ENCODE measurements at regions of chr4 and their contacts with region 1.

Region 1: GRCh38 chr4:67545199-67546003 is at the start of gene CENPC:
- DNase-seq: peak; percentile 93
- ATAC-seq: peak; percentile 92
- H3K4me3 ChIP-seq: peak within 1 kb of the TSS; percentile 65 to 96 (median 86)
- H3K4me3 Mint-ChIP-seq: peak within 1 kb of the TSS; percentile 97
- H3K27ac ChIP-seq: peak within 1 kb of the TSS; percentile 92 to 98
- H3K27ac Mint-ChIP-seq: peak within 1 kb of the TSS; percentile 97
- H3K4me1 ChIP-seq: peaks cover 17 to 20% of the 10 kb centered on the region in 2 donors
- H3K4me1 Mint-ChIP-seq: peaks cover 49% of the 10 kb centered on the region
- H3K27me3 ChIP-seq: no peaks in the 10 kb centered on the region
- H3K27me3 Mint-ChIP-seq: no peaks in the 10 kb centered on the region
- CTCF ChIP-seq: no peak
- total RNA-seq, gene CENPC: 67.0 and 76.5 TPM in 2 replicates

Region 2: DNA sequence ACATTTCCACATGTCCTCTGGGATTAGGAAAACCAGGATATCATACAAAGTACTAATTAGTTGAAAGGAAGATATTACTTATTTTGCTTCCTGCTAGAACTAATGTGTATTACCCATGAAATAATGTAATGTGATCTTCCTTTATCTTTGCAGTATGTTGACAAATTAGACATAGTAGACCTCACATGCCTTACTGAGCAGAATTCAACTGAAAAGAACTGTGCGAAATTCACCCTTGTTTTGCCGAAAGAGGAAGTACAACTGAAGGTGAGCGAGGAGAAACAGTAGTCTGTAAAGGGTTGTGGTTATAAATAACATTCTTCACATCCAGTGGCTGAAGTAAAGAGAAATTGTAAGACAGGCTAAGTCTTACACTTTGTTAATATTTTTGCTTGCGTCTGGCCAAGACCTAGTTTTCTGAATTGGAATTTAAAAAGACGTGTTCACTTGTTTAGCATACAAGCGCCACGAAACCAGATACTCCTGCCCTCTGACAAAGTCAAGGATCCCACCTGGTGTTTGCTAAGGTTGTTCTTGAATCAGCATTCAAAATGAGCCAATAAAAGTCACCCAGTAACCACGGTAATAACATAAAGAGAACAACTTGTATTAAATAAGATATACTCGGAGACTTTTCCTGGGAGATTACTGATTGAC is 30.0 kb after region 1 on chr4:
- CTCF ChIA-PET with region 1: interaction called, 12 read pairs
- POLR2A ChIA-PET with region 1: interaction called, 3 read pairs
- intact Hi-C with region 1: loop called (anchors 1 kb)
- DNase-seq: peak; percentile 83
- ATAC-seq: peak; percentile 91
- H3K4me3 ChIP-seq: peak overlapping the region; percentile 21 to 56 (median 39)
- H3K4me3 Mint-ChIP-seq: peak overlapping the region; percentile 55
- H3K27ac ChIP-seq: peak overlapping the region; percentile 76 to 92
- H3K27ac Mint-ChIP-seq: peak overlapping the region; percentile 69
- H3K4me1 ChIP-seq: peaks cover 49 to 67% of the 10 kb centered on the region in 2 donors
- H3K4me1 Mint-ChIP-seq: peaks cover 70% of the 10 kb centered on the region
- H3K27me3 ChIP-seq: no peaks in the 10 kb centered on the region
- H3K27me3 Mint-ChIP-seq: no peaks in the 10 kb centered on the region
- CTCF ChIP-seq: no peak

Region 3: GRCh38 chr4:67624939-67625338 is 79.5 kb after region 1 on chr4:
- CTCF ChIA-PET with region 1: interaction called, 9 read pairs
- POLR2A ChIA-PET with region 1: interaction called, 7 read pairs
- intact Hi-C with region 1: loop called (anchors 1 kb)
- DNase-seq: no peak
- ATAC-seq: no peak
- H3K4me3 ChIP-seq: no peak overlapping the region
- H3K4me3 Mint-ChIP-seq: no peak overlapping the region
- H3K27ac ChIP-seq: no peak overlapping the region
- H3K27ac Mint-ChIP-seq: no peak overlapping the region
- H3K4me1 ChIP-seq: no peaks in the 10 kb centered on the region
- H3K4me1 Mint-ChIP-seq: no peaks in the 10 kb centered on the region
- H3K27me3 ChIP-seq: no peaks in the 10 kb centered on the region
- H3K27me3 Mint-ChIP-seq: no peaks in the 10 kb centered on the region
- CTCF ChIP-seq: no peak

Region 4: GRCh38 chr4:67700738-67701516 is 155.5 kb after region 1 on chr4 and contains the start of gene UBA6:
- CTCF ChIA-PET with region 1: interaction called, 14 read pairs
- POLR2A ChIA-PET with region 1: interaction called, 19 read pairs
- intact Hi-C with region 1: loop called (anchors 1 kb)
- DNase-seq: peak; percentile 97
- ATAC-seq: peak; percentile 97
- H3K4me3 ChIP-seq: peak within 1 kb of the TSS; percentile 69 to 95 (median 88)
- H3K4me3 Mint-ChIP-seq: peak within 1 kb of the TSS; percentile 92
- H3K27ac ChIP-seq: peak within 1 kb of the TSS; percentile 69 to 88
- H3K27ac Mint-ChIP-seq: peak within 1 kb of the TSS; percentile 95
- H3K4me1 ChIP-seq: peaks cover 18 to 22% of the 10 kb centered on the region in 2 donors
- H3K4me1 Mint-ChIP-seq: peaks cover 57% of the 10 kb centered on the region
- H3K27me3 ChIP-seq: no peaks in the 10 kb centered on the region
- H3K27me3 Mint-ChIP-seq: no peaks in the 10 kb centered on the region
- CTCF ChIP-seq: peak; percentile 65
- total RNA-seq, gene UBA6: 64.0 and 85.6 TPM in 2 replicates

Region 5: DNA sequence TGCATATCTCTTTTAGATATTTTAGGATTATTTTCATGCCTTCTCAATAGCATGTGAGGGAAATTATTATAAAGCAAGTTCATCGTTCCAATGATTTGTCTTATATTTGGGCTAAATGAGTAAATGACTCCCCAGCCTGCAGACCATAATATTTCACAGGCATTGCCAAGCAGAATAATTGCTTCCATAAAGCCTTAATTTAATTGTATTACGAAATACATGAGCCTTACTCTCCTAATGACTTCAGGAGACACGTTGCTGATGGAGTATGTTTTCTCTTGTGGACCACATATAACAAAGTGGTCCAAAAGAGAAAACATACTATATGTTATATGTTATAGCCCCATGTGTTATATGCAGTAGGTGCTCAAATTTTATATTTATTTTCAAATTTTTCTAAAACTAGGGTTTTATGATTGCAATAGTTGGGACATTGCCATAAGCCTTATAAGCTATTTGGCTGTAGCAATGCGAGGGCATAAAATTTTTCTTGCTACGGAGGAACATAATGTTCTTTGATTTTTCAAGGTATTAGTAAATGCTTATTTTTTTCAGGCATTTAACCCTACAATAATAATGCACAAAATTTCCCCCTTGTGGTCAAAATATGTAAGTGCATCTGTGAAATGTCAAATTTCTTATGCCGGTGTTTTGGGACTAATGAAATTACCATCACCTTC is 364.6 kb after region 1 on chr4:
- CTCF ChIA-PET with region 1: interaction called, 14 read pairs
- POLR2A ChIA-PET with region 1: no interaction called
- intact Hi-C with region 1: no loop called
- DNase-seq: peak; percentile 43
- ATAC-seq: no peak
- H3K4me3 ChIP-seq: no peak overlapping the region
- H3K4me3 Mint-ChIP-seq: no peak overlapping the region
- H3K27ac ChIP-seq: no peak overlapping the region
- H3K27ac Mint-ChIP-seq: no peak overlapping the region
- H3K4me1 ChIP-seq: no peaks in the 10 kb centered on the region
- H3K4me1 Mint-ChIP-seq: no peaks in the 10 kb centered on the region
- H3K27me3 ChIP-seq: no peaks in the 10 kb centered on the region
- H3K27me3 Mint-ChIP-seq: peaks cover 25% of the 10 kb centered on the region
- CTCF ChIP-seq: peak; percentile 90

Measured in B cell (primary cell).